SK-N-SH (cell line): ENCODE measurements at regions of chr2 and their contacts with region 1.

Region 1: DNA sequence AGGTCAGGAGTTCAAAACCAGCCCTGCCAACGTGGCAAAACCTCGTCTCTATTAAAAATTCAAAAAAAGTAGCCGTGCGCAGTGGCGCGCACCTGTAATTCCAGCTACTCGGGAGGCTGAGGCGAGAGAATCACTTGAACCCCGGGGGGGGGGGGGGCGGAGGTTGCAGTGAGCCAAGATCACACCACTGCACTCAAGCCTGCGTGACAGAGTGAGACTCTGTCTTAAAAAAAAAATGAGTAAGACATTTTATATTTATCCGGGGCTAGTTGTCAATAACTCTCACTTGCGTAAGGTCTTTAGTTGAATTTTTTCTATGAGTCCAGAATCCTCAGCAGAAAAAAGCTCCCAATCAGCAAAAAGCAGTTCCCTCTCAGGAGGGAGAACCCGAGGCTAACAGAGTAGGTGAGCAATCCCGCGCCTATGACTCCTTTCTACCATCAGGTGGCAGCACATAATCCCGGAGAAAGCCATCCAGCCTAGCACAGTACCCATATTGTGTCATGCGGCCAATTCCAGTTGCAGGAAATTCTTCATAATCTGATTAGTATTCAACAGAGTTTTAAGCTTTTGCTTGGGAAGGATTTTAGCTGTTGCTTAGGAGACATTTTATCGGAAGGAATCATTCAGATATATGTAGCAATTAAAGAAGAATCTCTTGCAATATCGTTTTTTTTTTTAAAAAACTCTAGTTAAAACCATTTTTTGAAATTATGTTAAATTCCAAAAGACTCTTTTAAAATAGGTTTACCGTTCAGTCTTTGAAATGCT is 11.9 kb upstream of the CRYGA start:
- DNase-seq: peak; percentile 85
- H3K4me3 ChIP-seq: peak overlapping the region in 1 of 2 experiments; percentile 20; a peak in 1 of 4 replicates
- H3K27ac ChIP-seq: no peak overlapping the region
- H3K4me1 ChIP-seq: no peaks in the 10 kb centered on the region; a peak in 2 of 4 replicates
- H3K27me3 ChIP-seq: no peaks in the 10 kb centered on the region
- CTCF ChIP-seq: peak; percentile 89
- EP300 ChIP-seq: no peak
- RAD21 ChIP-seq: peak; percentile 84

Region 2: DNA sequence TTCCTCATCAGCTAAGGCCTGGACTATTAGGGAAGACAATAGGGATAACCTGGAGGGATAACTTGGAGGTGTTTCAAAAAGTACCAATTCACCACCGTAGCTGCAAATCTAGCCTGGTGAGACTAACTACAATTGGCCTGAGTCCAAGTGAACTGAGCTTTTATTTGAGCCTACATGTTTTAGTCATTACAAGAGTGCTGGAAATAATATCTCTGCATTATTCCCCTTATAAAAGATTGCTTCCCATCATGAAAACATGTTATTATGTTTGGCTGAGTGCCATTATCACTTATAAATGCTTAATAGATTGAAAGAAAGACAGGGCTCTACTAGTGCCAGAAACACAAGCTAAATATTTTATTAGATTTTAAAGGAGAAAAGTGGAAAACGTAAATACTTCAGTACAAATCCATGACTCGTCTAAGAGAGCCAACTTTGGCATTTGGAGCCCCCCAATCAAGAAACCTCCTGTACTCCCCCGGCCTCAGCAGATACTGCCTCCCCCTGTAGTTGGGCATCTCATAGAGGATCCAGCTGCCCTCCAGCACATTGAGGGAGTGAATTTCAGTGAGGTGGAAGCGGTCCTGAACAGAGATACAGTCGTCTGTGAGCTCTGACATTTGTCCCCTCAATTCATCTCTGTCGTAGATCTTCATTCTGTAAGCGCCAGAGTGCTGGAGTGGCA is 32.9 kb before region 1 on chr2:
- CTCF ChIA-PET with region 1: interaction called, 22 read pairs
- POLR2A ChIA-PET with region 1: no interaction called
- DNase-seq: peak; percentile 61
- H3K4me3 ChIP-seq: no peak overlapping the region
- H3K27ac ChIP-seq: peak overlapping the region in 1 of 2 experiments; percentile 81; a peak in 2 of 4 replicates
- H3K4me1 ChIP-seq: peaks cover 6 to 9% of the 10 kb centered on the region in 2 experiments; a peak in 3 of 4 replicates
- H3K27me3 ChIP-seq: no peaks in the 10 kb centered on the region
- CTCF ChIP-seq: no peak
- EP300 ChIP-seq: peak in 1 of 2 experiments; percentile 65; a peak in 2 of 4 replicates
- RAD21 ChIP-seq: no peak

Region 3: DNA sequence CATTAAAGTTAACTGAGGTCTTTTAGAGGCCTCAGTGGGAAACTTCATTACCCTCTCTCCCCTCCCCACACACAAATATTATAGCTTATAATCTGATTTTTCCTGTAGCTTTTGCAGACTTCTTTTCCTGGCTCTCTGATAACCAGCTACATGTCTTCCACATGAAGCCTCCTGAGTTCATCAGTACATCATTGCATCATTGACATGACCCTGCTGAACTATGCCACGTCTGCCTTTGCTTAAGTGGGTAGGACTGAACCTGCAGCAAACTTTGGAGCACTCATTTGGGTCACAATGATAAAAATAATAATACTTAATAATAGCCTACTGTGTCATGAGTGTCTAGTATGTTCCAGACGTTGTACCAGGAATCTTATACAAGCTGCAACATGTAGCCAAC is 18.8 kb before region 1 on chr2:
- CTCF ChIA-PET with region 1: interaction called, 19 read pairs
- POLR2A ChIA-PET with region 1: no interaction called
- DNase-seq: no peak
- H3K4me3 ChIP-seq: no peak overlapping the region
- H3K27ac ChIP-seq: no peak overlapping the region
- H3K4me1 ChIP-seq: no peaks in the 10 kb centered on the region
- H3K27me3 ChIP-seq: no peaks in the 10 kb centered on the region
- CTCF ChIP-seq: no peak
- EP300 ChIP-seq: no peak
- RAD21 ChIP-seq: no peak

Region 4: GRCh38 chr2:208186465-208186864 is 11.2 kb after region 1 on chr2:
- CTCF ChIA-PET with region 1: interaction called, 12 read pairs
- POLR2A ChIA-PET with region 1: no interaction called
- DNase-seq: no peak
- H3K4me3 ChIP-seq: no peak overlapping the region
- H3K27ac ChIP-seq: no peak overlapping the region
- H3K4me1 ChIP-seq: no peaks in the 10 kb centered on the region; a peak in 1 of 4 replicates
- H3K27me3 ChIP-seq: no peaks in the 10 kb centered on the region
- CTCF ChIP-seq: no peak
- EP300 ChIP-seq: no peak
- RAD21 ChIP-seq: no peak